ENCODE measurements at regions of chr1 and their contacts with region 1.

Region 1: GRCh38 chr1:182629499-182630096 is 25.4 kb upstream of the RGS16 start:
- DNase-seq: peak; percentile 76
- H3K4me3 Mint-ChIP-seq: peak overlapping the region; percentile 47
- H3K27ac Mint-ChIP-seq: peak overlapping the region; percentile 80
- H3K4me1 Mint-ChIP-seq: peaks cover 65% of the 10 kb centered on the region
- H3K27me3 Mint-ChIP-seq: peaks cover 21% of the 10 kb centered on the region

Region 2: GRCh38 chr1:182709225-182709771 is 79.7 kb after region 1 on chr1:
- intact Hi-C with region 1: loop called (anchors 1 kb)
- DNase-seq: no peak
- H3K4me3 Mint-ChIP-seq: peak overlapping the region; percentile 43
- H3K27ac Mint-ChIP-seq: peak overlapping the region; percentile 74
- H3K4me1 Mint-ChIP-seq: peaks cover 30% of the 10 kb centered on the region
- H3K27me3 Mint-ChIP-seq: no peaks in the 10 kb centered on the region